Head of caudate nucleus (tissue), 42 donors: ENCODE measurements at regions of chr1 and their contacts with region 1.

Region 1: DNA sequence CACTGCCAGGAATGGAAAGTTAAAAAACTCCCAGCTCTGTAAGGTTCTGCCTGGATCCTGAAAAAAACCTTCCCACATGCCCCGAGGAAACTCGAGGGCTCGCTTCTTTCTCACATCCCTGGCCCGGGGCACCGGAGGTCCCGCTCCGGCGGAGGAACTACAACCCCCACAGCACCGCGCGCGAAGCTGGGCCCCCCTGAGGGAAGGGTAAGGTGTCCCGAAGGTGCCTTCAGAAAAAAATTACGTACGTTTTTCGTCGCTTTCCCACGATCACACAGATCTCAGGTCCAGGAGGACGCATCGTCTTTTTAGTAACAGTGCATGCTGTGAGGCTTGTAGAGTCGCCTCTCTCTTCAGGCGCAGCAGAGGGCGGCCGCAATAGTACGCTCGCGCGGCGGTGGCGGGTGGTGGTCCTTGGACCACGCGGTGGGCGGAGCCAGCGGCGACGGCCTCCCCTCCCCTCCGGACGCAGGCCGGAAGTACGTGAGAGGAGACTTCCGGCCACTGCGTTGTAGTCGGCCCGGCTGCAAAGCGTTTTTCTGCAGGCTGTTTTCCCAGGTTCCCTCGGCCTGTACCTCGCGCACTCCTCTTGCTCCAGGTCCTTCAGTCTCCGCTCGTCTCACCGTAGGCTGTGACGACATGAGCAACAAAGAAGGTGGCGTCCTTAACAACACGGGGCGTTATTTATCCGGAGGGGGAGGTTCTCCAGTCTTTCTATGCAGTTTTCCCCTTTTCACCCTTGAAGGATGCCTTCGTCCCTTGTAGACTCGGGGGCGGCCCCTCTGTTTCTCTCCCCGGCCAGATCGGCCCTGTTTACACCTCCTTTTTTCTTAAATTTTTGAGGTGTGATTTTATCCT is at the start of gene TSNAX:
- DNase-seq: peak; percentile 75 to 95 (median 91)

Region 2: DNA sequence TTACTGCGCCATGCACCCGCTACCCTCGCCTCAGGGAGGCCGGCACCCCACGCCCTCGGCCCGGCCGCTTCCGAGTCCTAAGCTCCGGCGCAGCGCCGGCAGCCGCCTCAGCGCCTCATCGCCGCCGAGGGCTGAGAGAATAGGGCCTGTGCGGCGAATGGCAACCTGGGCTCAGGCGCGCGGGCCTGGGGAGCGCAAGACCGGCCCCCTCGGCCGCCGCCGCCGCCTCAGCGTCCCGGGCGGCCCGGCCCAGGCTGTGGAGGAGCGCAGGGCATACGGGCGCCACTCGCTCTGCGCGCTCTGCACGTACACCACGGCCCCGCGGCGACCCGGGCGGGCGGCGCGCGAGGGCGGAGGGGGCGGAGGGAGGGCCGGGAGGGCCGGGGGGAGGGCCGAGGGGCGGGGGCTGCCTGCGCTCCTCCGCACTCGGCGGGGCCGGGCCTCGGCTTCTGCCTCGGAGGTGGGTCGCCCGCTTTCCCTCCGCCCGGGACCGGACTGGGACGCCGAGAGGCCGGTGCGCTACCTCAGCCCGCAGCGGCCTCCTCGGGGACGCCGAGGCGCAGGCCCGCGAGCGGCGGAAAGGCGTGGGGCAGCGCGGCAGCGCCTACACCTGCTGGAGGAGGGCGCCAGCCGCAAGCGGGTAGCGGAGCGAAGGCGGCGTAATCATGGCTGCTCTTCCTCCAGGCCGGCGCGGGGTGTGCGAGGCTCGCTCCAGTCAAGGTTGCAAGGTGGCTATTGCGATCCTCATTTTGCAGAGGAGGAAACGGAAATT is 106.2 kb before region 1 on chr1 and contains the start of gene EGLN1:
- intact Hi-C with region 1: loop called (anchors 5 kb)
- DNase-seq: peak; percentile 27 to 90 (median 82)

Region 3: GRCh38 chr1:231643071-231643934 is 114.9 kb after region 1 on chr1:
- intact Hi-C with region 1: no loop called
- DNase-seq: peak in 29 of 42 donors; percentile 21 to 76 (median 51)